ENCODE measurements at regions of chr4 and their contacts with region 1.

Region 1: GRCh38 chr4:119628308-119629141 is at the start of gene PDE5A:
- DNase-seq: peak; percentile 85
- H3K4me3 Mint-ChIP-seq: peak within 1 kb of the TSS; percentile 80
- H3K27ac Mint-ChIP-seq: no peak within 1 kb of the TSS
- H3K4me1 Mint-ChIP-seq: peaks cover 15% of the 10 kb centered on the region
- H3K27me3 Mint-ChIP-seq: peaks cover 15% of the 10 kb centered on the region
- total RNA-seq, gene PDE5A: 0.64 to 0.87 TPM

Region 2: GRCh38 chr4:119314356-119314755 is 314.2 kb before region 1 on chr4:
- CTCF ChIA-PET with region 1: interaction called, 7 read pairs
- POLR2A ChIA-PET with region 1: no interaction called
- intact Hi-C with region 1: loop called (anchors 1 kb)
- DNase-seq: no peak
- H3K4me3 Mint-ChIP-seq: no peak overlapping the region
- H3K27ac Mint-ChIP-seq: no peak overlapping the region
- H3K4me1 Mint-ChIP-seq: no peaks in the 10 kb centered on the region
- H3K27me3 Mint-ChIP-seq: peaks cover 6% of the 10 kb centered on the region

Region 3: GRCh38 chr4:119597377-119597776 is 31.1 kb before region 1 on chr4:
- CTCF ChIA-PET with region 1: interaction called, 11 read pairs
- POLR2A ChIA-PET with region 1: no interaction called
- intact Hi-C with region 1: no loop called
- DNase-seq: no peak
- H3K4me3 Mint-ChIP-seq: no peak overlapping the region
- H3K27ac Mint-ChIP-seq: no peak overlapping the region
- H3K4me1 Mint-ChIP-seq: no peaks in the 10 kb centered on the region
- H3K27me3 Mint-ChIP-seq: no peaks in the 10 kb centered on the region

Region 4: GRCh38 chr4:119615068-119615719 is 13.3 kb before region 1 on chr4:
- CTCF ChIA-PET with region 1: interaction called, 15 read pairs
- POLR2A ChIA-PET with region 1: no interaction called
- intact Hi-C with region 1: no loop called
- DNase-seq: no peak
- H3K4me3 Mint-ChIP-seq: no peak overlapping the region
- H3K27ac Mint-ChIP-seq: no peak overlapping the region
- H3K4me1 Mint-ChIP-seq: no peaks in the 10 kb centered on the region
- H3K27me3 Mint-ChIP-seq: peaks cover 1% of the 10 kb centered on the region

Region 5: GRCh38 chr4:119697887-119698393 is 69.4 kb after region 1 on chr4:
- CTCF ChIA-PET with region 1: no interaction called
- POLR2A ChIA-PET with region 1: no interaction called
- intact Hi-C with region 1: no loop called
- DNase-seq: no peak
- H3K4me3 Mint-ChIP-seq: no peak overlapping the region
- H3K27ac Mint-ChIP-seq: no peak overlapping the region
- H3K4me1 Mint-ChIP-seq: no peaks in the 10 kb centered on the region
- H3K27me3 Mint-ChIP-seq: peaks cover 13% of the 10 kb centered on the region

Region 6: GRCh38 chr4:119825696-119826095 is 197.2 kb after region 1 on chr4:
- CTCF ChIA-PET with region 1: no interaction called
- POLR2A ChIA-PET with region 1: no interaction called
- intact Hi-C with region 1: no loop called
- DNase-seq: no peak
- H3K4me3 Mint-ChIP-seq: no peak overlapping the region
- H3K27ac Mint-ChIP-seq: no peak overlapping the region
- H3K4me1 Mint-ChIP-seq: no peaks in the 10 kb centered on the region
- H3K27me3 Mint-ChIP-seq: no peaks in the 10 kb centered on the region

Region 7: DNA sequence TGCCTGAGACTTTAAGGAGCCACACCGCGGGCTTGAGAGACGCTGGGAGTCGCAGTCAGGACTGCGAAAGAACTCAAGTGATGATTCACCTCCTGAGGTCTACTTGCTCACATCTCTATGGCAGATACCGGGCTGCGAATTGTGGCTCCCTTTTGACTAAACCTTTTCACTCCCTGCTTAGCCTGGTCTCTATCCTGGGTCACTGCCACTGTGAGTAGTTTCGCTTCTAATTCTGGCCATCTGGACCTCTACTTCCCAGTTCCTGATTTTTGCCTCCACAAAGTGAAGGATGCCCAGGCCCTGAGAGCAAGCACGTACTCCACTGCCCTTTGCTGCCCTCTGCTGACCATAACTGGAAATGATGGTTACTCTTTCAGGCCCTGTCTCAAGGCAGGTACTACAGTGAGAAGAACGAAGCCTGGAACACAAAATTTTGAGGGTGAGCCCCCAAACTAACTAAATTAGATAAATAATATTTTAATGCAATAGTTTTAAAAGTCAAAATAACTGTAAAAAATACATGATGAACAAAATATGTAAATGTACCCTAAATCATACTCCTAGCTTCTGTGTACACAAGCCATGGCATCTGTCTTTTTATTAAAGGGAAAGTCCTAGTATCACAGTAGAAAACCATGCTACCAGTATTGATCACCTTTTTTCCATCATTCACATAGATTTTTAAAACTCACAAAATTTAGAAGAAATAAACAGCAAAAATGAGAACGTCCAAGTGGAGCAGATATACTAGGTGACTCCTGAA is 421.4 kb after region 1 on chr4:
- CTCF ChIA-PET with region 1: interaction called, 43 read pairs
- POLR2A ChIA-PET with region 1: no interaction called
- intact Hi-C with region 1: loop called (anchors 1 kb)
- DNase-seq: peak; percentile 74
- H3K4me3 Mint-ChIP-seq: no peak overlapping the region
- H3K27ac Mint-ChIP-seq: no peak overlapping the region
- H3K4me1 Mint-ChIP-seq: peaks cover 2% of the 10 kb centered on the region
- H3K27me3 Mint-ChIP-seq: no peaks in the 10 kb centered on the region